ENCODE measurements at regions of chr2 and their contacts with region 1.

Region 1: DNA sequence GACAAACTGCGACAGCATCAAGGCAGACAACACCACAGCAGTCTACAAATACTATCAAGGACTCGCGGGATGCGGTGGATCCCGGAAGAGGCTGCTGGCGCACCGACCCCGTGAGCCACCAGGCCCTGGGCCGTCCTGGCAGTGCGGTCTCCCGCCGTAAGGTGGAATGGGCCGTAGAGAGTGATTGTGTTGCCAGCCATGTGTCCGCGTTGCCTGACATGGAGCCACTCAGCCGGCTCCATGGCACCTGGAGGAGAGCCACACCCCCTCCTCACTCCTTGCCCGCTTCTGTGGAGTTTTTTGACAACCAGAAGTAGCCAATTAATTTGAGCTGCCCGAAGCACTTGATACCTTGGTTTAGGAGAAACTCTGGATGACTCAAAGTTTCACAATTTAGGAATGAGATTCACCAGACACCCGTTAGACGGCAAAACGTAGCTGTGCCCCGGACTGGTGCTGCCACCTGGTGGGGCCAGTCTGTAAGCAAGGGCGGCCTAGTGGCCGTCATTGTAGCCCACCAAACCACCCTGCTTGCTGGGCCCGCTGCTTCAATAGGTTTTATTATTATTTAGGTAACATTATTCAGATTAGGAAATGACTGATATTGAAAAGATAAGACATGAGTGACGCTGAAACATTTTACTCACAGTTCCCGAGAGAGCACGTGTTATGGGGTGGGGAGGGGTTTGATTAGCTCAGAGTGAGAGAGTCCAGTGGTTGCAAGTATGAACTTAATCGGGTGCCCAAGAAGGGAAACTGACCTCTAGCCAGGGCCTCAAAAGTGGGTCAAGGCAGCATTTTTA is 10.2 kb upstream of the IMP4 start:
- DNase-seq: peak; percentile 85
- H3K4me3 Mint-ChIP-seq: no peak overlapping the region
- H3K27ac Mint-ChIP-seq: no peak overlapping the region
- H3K4me1 Mint-ChIP-seq: no peaks in the 10 kb centered on the region
- H3K27me3 Mint-ChIP-seq: peaks cover 57% of the 10 kb centered on the region
- CTCF ChIP-seq: peak; percentile 89

Region 2: GRCh38 chr2:130181325-130181879 is 151.1 kb before region 1 on chr2 and contains the start of gene SMPD4:
- CTCF ChIA-PET with region 1: interaction called, 9 read pairs
- intact Hi-C with region 1: loop called (anchors 5 kb)
- DNase-seq: peak; percentile 96
- H3K4me3 Mint-ChIP-seq: peak within 1 kb of the TSS; percentile 95
- H3K27ac Mint-ChIP-seq: peak within 1 kb of the TSS; percentile 89
- H3K4me1 Mint-ChIP-seq: peaks cover 24% of the 10 kb centered on the region
- H3K27me3 Mint-ChIP-seq: no peaks in the 10 kb centered on the region
- CTCF ChIP-seq: no peak
- total RNA-seq, gene SMPD4: 90.1 and 97.8 TPM in 2 replicates

Region 3: DNA sequence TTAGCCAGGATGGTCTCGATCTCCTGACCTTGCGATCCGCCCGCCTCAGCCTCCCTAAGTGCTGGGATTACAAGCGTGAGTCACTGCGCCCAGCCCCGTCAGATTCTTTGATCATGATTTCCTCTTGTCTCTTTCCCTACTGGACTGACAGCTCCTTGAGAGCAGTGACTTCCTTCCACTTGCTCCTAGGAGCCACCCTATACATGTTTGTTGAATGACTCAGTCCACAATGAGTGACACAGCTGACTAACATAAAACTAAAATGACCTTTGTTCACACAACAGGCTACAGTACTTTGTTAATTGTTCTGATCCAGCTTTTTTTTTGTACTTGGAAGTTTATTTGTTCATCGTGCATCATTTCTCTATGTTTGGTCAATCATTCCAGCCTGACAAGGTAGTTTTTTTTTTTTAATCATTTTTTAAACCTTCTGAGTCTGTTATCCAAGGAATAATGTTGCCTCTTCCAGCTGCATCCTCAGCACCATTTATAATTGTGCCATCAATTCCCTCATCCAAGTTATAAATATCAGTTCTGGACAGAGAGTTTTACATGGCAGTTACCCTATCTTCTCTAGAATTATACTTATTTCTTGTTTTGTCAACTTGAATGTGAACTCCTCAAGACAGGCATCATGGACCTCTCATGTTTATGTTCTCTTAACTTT is 91.3 kb before region 1 on chr2:
- CTCF ChIA-PET with region 1: no interaction called
- intact Hi-C with region 1: loop called (anchors 5 kb)
- DNase-seq: peak; percentile 79
- H3K4me3 Mint-ChIP-seq: peak overlapping the region; percentile 14
- H3K27ac Mint-ChIP-seq: peak overlapping the region; percentile 78
- H3K4me1 Mint-ChIP-seq: peaks cover 14% of the 10 kb centered on the region
- H3K27me3 Mint-ChIP-seq: peaks cover 5% of the 10 kb centered on the region
- CTCF ChIP-seq: no peak

Region 4: GRCh38 chr2:130288461-130289403 is 43.7 kb before region 1 on chr2:
- CTCF ChIA-PET with region 1: interaction called, 32 read pairs
- intact Hi-C with region 1: loop called (anchors 1 kb)
- DNase-seq: peak; percentile 83
- H3K4me3 Mint-ChIP-seq: peak overlapping the region; percentile 61
- H3K27ac Mint-ChIP-seq: no peak overlapping the region
- H3K4me1 Mint-ChIP-seq: no peaks in the 10 kb centered on the region
- H3K27me3 Mint-ChIP-seq: peaks cover 33% of the 10 kb centered on the region
- CTCF ChIP-seq: peak; percentile 64

Region 5: GRCh38 chr2:130342533-130343275 is 10.2 kb after region 1 on chr2 and contains the start of gene IMP4:
- CTCF ChIA-PET with region 1: interaction called, 14 read pairs
- intact Hi-C with region 1: no loop called
- DNase-seq: peak; percentile 94
- H3K4me3 Mint-ChIP-seq: peak within 1 kb of the TSS; percentile 86
- H3K27ac Mint-ChIP-seq: peak within 1 kb of the TSS; percentile 82
- H3K4me1 Mint-ChIP-seq: peaks cover 17% of the 10 kb centered on the region
- H3K27me3 Mint-ChIP-seq: no peaks in the 10 kb centered on the region
- CTCF ChIP-seq: no peak
- total RNA-seq, gene IMP4: 79.6 and 89.4 TPM in 2 replicates

Region 6: DNA sequence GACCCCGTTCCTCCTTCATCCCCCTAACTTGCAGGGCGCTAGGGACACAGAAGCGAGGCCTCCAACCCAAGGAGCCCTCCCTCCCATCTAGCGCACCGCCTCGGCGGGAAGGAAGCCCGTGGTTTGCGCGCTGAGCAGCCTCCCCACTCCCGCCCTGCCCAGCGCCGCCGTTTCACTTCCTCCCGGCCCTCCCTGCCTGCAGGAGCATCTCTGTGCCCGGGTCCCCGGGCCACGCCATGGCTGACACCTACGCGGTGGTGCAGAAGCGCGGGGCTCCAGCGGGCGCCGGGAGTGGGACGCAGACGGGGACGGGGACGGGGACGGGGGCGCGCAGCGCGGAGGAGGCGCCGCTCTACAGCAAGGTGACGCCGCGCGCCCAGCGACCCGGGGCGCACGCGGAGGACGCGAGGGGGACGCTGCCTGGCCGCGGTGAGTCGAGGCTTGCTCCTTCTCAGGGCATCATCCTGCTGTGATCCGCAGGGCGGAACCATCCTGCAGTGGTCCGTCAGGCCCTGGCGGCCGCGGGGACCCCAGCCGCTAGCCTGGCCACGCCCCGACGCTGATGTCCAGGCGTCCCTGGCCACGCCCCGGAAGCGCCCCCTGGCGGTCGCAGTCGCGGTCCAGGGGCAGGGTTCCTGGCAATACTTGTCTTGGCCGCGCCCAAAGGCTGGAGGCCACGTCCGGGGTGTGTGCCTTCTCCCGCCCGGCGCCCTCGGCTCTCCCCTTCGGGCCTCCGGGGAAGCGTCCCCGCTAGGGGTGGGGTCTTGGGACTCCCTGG is 39.8 kb after region 1 on chr2:
- CTCF ChIA-PET with region 1: no interaction called
- intact Hi-C with region 1: no loop called
- DNase-seq: peak; percentile 97
- H3K4me3 Mint-ChIP-seq: peak overlapping the region; percentile 84
- H3K27ac Mint-ChIP-seq: peak overlapping the region; percentile 73
- H3K4me1 Mint-ChIP-seq: peaks cover 30% of the 10 kb centered on the region
- H3K27me3 Mint-ChIP-seq: no peaks in the 10 kb centered on the region
- CTCF ChIP-seq: peak; percentile 86

Region 7: GRCh38 chr2:130391058-130391871 is 58.8 kb after region 1 on chr2:
- CTCF ChIA-PET with region 1: no interaction called
- intact Hi-C with region 1: no loop called
- DNase-seq: peak; percentile 81
- H3K4me3 Mint-ChIP-seq: peak overlapping the region; percentile 70
- H3K27ac Mint-ChIP-seq: peak overlapping the region; percentile 57
- H3K4me1 Mint-ChIP-seq: peaks cover 8% of the 10 kb centered on the region
- H3K27me3 Mint-ChIP-seq: no peaks in the 10 kb centered on the region
- CTCF ChIP-seq: no peak

Measured in Calu3 (cell line).